ENCODE measurements at regions of chr2 and their contacts with region 1.

Region 1: DNA sequence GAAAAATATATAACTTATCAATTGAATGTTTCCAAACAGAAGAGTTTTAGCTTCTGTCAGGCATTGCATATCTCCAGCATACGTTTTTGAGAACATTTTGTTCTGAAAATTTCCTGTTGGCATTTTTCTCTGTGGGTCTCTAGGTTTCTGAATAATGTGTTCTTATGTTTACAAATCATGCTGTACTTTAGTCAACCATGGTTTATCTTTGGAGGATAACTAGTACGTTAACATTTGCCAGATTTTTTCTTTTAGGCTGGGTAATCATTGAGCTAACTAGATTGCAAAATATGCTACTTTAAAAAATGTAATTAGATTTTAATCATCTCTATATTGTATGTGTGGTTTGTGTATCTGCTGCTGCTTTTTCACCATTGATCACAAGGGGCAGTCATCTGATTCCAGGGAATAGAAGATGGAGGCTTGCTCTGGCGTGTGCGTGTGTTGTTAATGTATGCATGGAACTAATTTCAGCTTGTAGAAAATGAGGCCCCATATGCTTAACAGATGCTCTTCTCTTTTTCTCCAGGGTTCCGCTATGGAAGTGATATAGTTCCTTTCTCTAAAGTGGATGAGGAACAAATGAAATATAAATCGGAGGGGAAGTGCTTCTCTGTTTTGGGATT is 21.3 kb downstream of the XRCC5 start:
- DNase-seq: no peak
- H3K4me3 ChIP-seq: no peak overlapping the region
- H3K27ac ChIP-seq: no peak overlapping the region
- H3K4me1 ChIP-seq: no peaks in the 10 kb centered on the region
- H3K27me3 ChIP-seq: peaks cover 0 to 1% (median 0%) of the 10 kb centered on the region in 4 experiments; a peak in 1 of 7 replicates
- CTCF ChIP-seq: no peak
- EP300 ChIP-seq: no peak
- POLR2A ChIP-seq: no peak
- RAD21 ChIP-seq: no peak

Region 2: GRCh38 chr2:216114714-216115557 is 15.5 kb before region 1 on chr2:
- CTCF ChIA-PET with region 1: interaction called, 25 read pairs
- POLR2A ChIA-PET with region 1: interaction called, 14 read pairs
- DNase-seq: peak; percentile 98 to 99
- H3K4me3 ChIP-seq: peak overlapping the region in 3 of 4 experiments; percentile 17 to 56 (median 24); a peak in 4 of 8 replicates
- H3K27ac ChIP-seq: peak overlapping the region; percentile 92
- H3K4me1 ChIP-seq: peaks cover 6 to 15% (median 10%) of the 10 kb centered on the region in 4 experiments; a peak in 6 of 7 replicates
- H3K27me3 ChIP-seq: no peaks in the 10 kb centered on the region
- CTCF ChIP-seq: peak; percentile 68 to 93 (median 75)
- EP300 ChIP-seq: no peak
- POLR2A ChIP-seq: peak; percentile 70 to 89
- RAD21 ChIP-seq: no peak; a peak in 1 of 4 replicates

Region 3: GRCh38 chr2:216119986-216120385 is 10.5 kb before region 1 on chr2:
- CTCF ChIA-PET with region 1: interaction called, 25 read pairs
- POLR2A ChIA-PET with region 1: interaction called, 76 read pairs
- DNase-seq: no peak
- H3K4me3 ChIP-seq: no peak overlapping the region
- H3K27ac ChIP-seq: no peak overlapping the region
- H3K4me1 ChIP-seq: peaks cover 0 to 6% (median 5%) of the 10 kb centered on the region in 4 experiments; a peak in 5 of 7 replicates
- H3K27me3 ChIP-seq: no peaks in the 10 kb centered on the region
- CTCF ChIP-seq: no peak
- EP300 ChIP-seq: no peak
- POLR2A ChIP-seq: no peak
- RAD21 ChIP-seq: no peak

Region 4: DNA sequence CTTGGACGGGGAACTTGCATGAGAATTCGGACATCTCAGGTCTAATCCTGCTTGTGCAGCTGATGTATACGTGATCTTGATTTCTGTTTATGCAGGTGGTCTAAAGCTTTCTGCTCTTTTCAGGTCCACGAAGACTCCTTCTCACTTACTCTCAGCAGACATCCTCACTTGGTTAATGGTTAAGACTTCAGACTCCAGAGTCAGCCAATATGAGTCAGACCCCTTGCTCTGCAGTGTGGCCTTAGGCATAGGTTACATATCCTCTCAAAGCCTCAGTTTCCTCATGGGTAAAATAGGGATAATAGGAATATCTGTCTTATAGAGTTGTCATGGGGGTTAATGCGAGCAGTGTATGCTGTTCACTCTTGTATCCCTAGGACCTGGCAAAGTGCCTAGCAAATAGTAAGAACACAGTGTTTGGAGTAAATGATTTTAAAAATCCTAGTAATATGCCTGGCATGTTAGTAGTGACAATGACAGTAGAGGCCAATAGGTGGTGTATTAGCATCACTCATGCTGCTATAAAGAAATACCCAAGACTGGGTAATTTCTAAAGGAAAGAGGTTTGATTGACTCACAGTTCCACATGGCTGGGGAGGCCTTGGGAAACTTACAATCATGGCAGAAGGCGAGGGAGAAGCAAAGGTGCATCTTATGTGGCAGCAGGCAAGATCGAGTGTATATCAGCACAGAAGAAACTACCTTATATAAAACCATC is 21.0 kb after region 1 on chr2:
- CTCF ChIA-PET with region 1: interaction called, 5 read pairs
- POLR2A ChIA-PET with region 1: interaction called, 101 read pairs
- DNase-seq: no peak
- H3K4me3 ChIP-seq: no peak overlapping the region
- H3K27ac ChIP-seq: no peak overlapping the region
- H3K4me1 ChIP-seq: no peaks in the 10 kb centered on the region
- H3K27me3 ChIP-seq: no peaks in the 10 kb centered on the region
- CTCF ChIP-seq: peak in 1 of 3 experiments; percentile 9; a peak in 1 of 4 replicates
- EP300 ChIP-seq: no peak
- POLR2A ChIP-seq: 0 out of 3 replicates have a peak, but pooled peaks of 1 of the 2 experiments have one; percentile 18
- RAD21 ChIP-seq: peak; percentile 12 to 18; a peak in 2 of 4 replicates

Measured in H1 (cell line).